PC-9 (cell line): ENCODE measurements at regions of chr3 and their contacts with region 1.

Region 1: GRCh38 chr3:24237971-24238767 is 256.5 kb downstream of the THRB start:
- DNase-seq: peak; percentile 63 to 95
- H3K4me3 ChIP-seq: no peak overlapping the region; the same call in 1 of the 2 replicates
- H3K27ac ChIP-seq: peak overlapping the region; percentile 77
- H3K4me1 ChIP-seq: peaks cover 65% of the 10 kb centered on the region
- H3K27me3 ChIP-seq: no peaks in the 10 kb centered on the region
- CTCF ChIP-seq: peak; percentile 84

Region 2: DNA sequence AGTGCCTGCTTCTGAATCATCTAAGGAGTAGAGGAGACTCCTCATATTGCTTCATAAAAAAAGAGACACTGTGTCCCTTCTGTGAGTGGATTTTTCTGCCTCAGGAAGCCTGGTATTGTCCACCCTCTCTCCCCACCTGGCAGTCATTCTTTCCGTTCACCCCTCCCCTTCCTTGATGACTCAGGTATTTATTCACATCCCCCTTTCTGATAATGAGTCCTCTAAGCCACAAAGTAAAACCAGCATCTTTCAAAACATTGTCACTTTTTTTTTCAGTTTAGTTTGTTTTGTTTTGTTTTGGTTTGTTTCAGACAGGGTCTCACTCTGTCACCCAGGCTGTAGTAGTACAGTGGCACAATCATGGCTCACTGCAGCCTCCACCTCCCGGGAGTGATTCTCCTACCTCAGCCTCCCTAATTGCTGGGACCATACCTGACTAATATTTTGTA is 497.6 kb before region 1 on chr3:
- CTCF ChIA-PET with region 1: no interaction called
- POLR2A ChIA-PET with region 1: no interaction called
- intact Hi-C with region 1: loop called (anchors 5 kb)
- DNase-seq: peak; percentile 72 to 91
- H3K4me3 ChIP-seq: peak overlapping the region; percentile 54
- H3K27ac ChIP-seq: peak overlapping the region; percentile 100
- H3K4me1 ChIP-seq: peaks cover 74% of the 10 kb centered on the region
- H3K27me3 ChIP-seq: no peaks in the 10 kb centered on the region
- CTCF ChIP-seq: no peak

Region 3: DNA sequence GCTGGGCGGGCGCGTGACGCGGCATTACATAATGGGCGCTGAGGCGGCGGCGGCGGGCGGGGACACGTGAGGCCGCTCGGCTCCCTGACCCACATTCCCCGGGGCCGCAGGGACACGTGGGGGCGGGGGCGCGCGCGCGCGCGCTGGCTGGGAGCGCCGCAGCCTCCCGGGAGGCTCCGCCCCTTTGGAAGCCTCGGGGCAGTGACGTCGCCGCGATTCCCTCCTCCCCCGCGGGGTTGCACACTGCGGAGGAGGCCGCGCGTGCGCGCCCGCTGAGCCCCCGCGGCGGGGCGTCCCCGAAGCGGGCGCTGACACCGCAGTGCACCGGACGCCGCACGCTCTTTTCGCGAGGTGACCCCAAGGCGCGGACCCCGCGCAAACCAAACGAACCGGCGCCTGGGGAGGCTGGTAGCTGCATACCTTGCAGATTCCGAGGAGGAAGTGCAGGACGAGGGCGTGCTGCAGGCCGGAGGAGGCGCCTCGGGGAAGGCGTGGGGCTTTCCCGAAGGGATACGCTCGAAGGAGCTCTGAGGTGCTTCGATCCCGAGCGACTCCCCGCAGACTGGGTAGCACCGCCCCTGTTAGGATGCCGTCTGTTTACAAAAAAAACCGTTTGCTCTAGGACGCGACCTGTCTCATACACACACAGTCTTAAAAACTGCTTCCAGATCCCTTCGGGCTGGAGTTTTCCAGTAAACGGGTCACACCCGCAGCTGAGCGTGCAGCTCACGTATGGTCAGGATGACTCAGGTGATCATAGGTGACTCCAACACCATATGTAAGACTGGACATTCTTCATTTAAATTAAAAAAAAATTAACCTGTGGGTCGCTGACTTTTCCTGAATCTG is 292.0 kb before region 1 on chr3:
- CTCF ChIA-PET with region 1: no interaction called
- POLR2A ChIA-PET with region 1: interaction called, 4 read pairs
- intact Hi-C with region 1: loop called (anchors 1 kb)
- DNase-seq: peak; percentile 73 to 97
- H3K4me3 ChIP-seq: peak overlapping the region; percentile 70
- H3K27ac ChIP-seq: peak overlapping the region; percentile 94
- H3K4me1 ChIP-seq: peaks cover 27% of the 10 kb centered on the region
- H3K27me3 ChIP-seq: no peaks in the 10 kb centered on the region
- CTCF ChIP-seq: no peak

Region 4: GRCh38 chr3:24069045-24069444 is 169.1 kb before region 1 on chr3:
- CTCF ChIA-PET with region 1: no interaction called
- POLR2A ChIA-PET with region 1: no interaction called
- intact Hi-C with region 1: loop called (anchors 1 kb)
- DNase-seq: peak in 1 of 2 experiments; percentile 17
- H3K4me3 ChIP-seq: no peak overlapping the region
- H3K27ac ChIP-seq: no peak overlapping the region
- H3K4me1 ChIP-seq: no peaks in the 10 kb centered on the region
- H3K27me3 ChIP-seq: no peaks in the 10 kb centered on the region
- CTCF ChIP-seq: peak; percentile 57

Region 5: DNA sequence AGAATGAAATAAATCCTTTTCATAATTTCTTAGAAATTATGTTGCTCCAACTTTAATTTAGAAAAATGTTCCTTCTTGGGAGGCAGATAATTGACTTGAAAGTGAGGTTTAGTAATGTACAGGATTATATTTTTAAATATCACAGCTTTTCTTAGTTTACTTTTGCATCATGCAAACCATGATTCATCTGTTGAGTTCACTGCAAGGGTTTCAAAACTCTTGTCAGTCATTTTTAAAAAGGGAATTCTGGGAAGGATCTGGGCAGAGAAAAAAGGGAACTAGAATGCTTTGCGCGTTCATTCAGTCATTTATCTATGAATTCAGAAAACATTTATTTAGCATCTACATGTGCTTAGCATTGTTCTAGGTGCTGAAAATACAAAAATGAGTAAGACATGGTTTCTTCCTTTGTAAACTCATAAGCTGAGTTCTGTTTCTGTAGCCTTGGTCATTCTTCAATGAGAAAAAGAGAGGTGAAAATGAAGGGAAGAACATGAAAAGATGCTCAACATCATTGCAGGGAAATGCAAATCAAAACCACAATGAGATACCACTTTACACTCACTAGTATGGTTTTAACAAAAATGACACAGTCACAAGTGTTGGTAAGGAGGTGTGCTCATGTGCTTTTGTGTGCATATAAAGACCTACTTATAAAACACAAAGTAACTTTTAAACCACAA is 84.0 kb before region 1 on chr3:
- CTCF ChIA-PET with region 1: no interaction called
- POLR2A ChIA-PET with region 1: interaction called, 7 read pairs
- intact Hi-C with region 1: loop called (anchors 2 kb)
- DNase-seq: no peak
- H3K4me3 ChIP-seq: no peak overlapping the region
- H3K27ac ChIP-seq: peak overlapping the region; percentile 27
- H3K4me1 ChIP-seq: peaks cover 64% of the 10 kb centered on the region
- H3K27me3 ChIP-seq: no peaks in the 10 kb centered on the region
- CTCF ChIP-seq: no peak

Region 6: DNA sequence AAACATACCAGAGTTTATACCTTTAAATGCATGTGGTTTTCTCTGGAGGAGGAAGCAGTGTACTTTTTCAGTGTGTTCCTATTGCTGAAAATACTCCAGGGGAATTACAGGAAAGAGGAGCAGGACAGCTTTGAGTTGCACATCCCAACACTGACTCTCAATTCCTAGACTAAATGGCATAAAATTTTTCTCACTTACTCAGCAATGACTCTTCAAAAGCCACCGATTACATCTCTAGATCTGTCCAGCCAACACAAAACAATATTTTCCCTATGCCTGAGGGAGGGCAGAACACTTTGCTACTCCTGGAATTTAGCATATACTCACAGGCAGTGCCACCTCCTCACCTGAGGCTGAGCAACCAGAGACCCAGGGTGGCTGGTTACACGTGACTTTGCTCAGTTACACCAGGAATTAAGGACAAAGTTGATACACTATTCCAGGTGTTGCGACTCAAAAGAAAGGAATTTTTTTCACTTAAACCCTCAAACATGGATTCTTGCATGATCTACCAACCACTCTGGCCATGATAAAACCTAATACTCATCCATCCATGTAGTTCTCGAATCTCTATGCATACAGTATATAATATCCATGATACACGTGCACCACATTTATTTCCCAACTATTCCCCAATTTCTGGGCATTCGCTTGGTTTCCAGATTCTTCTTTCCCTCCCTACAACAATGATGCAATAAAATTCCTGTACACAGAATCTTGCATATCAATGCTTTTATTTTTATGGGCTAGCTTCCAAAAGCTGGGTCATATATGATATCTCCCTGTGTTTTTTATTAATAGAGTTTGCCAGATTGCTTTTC is 61.8 kb after region 1 on chr3:
- CTCF ChIA-PET with region 1: no interaction called
- POLR2A ChIA-PET with region 1: no interaction called
- intact Hi-C with region 1: loop called (anchors 1 kb)
- DNase-seq: peak; percentile 75 to 91
- H3K4me3 ChIP-seq: no peak overlapping the region
- H3K27ac ChIP-seq: peak overlapping the region; percentile 72
- H3K4me1 ChIP-seq: peaks cover 24% of the 10 kb centered on the region
- H3K27me3 ChIP-seq: no peaks in the 10 kb centered on the region
- CTCF ChIP-seq: no peak

Region 7: GRCh38 chr3:24680214-24680967 is 442.2 kb after region 1 on chr3:
- CTCF ChIA-PET with region 1: no interaction called
- POLR2A ChIA-PET with region 1: interaction called, 5 read pairs
- intact Hi-C with region 1: loop called (anchors 1 kb)
- DNase-seq: peak in 1 of 2 experiments; percentile 12
- H3K4me3 ChIP-seq: no peak overlapping the region
- H3K27ac ChIP-seq: no peak overlapping the region
- H3K4me1 ChIP-seq: peaks cover 24% of the 10 kb centered on the region
- H3K27me3 ChIP-seq: no peaks in the 10 kb centered on the region
- CTCF ChIP-seq: peak; percentile 56; the same call in 1 of the 2 replicates